Right cardiac atrium (tissue), 5 donors: ENCODE measurements at regions of chr3 and their contacts with region 1.

Region 1: DNA sequence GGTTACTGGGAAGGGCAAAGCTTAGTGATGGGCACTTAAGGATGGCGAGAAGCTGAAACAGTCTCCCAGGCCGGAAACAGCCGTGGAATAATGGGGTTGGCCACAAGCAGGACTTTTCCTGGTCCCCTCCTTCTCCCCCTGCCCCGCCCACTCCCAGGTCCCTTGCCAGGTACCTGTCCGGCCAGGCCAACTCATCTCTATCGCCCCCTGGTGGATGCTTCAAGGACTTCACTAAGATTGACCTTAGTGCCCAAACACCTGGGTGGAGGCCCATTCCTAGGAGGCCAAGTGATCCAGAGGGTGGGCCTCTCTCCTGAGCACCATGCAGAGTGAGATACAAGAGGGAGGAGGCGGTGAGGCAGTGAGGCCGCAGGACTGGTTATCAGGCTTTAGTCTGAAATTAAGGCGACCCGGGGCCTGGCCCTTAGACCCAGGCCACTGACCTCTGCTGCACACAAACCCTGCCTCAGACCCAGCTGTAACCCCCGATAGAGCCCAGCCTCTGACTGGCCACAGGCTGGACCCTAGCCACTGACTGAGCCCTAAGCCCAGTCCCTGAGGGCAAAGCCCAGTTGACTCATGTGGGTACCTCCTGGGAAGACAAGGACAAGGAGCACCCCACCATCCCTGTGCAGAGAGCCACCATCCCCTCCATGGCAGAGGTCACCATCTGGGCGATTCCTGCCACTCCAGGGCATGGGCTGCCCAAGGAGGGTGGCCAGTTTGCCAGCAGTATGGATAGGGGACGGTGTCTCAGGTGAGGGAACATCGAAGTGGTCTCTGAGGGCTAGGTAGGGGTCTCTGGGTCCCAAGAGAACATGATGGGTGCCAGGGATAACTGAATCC is 37.6 kb downstream of the VIPR1 start:
- DNase-seq: peak in 2 of 3 donors; percentile 69 to 70
- ATAC-seq: peak; percentile 2 to 15
- H3K4me3 ChIP-seq: no peak overlapping the region
- H3K27ac ChIP-seq: no peak overlapping the region
- H3K4me1 ChIP-seq: peaks cover 5% of the 10 kb centered on the region
- H3K27me3 ChIP-seq: no peaks in the 10 kb centered on the region

Region 2: DNA sequence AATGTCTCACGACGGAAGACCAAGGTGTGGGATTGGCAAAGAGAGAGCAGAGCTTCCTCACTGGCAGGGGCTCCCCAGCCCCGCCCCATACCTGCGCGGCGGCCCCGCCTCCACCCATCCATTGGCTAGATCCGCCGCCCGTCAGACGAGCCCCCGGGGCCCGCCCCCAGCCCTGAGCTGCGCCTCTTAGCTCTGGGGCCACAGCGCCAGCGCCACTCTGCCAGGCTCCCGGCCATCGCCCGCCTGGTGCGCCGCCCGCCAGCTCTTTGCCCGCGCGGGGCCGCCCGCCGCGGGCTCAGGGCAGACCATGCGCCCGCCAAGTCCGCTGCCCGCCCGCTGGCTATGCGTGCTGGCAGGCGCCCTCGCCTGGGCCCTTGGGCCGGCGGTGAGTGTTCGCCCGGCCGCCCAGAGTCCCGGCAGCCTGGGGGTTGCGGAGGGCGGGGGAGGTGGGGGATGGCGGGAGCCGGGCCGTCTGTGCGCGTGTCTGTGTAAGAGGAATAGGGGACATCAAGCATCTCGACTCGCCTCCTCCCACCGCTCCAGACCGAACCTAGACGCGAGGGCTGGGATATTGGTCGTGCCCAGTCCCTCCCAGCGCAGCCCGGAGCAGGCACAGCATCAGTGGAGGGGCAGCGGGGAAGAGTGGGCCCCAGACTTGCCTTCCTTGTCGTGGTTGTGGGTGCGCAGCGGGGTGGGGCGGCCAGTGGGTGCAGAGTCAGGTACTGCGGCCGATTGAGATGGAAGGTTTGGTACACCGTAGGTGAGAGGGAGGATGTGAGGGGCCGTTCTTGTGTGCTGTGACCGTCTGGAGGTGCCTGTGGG is 37.5 kb before region 1 on chr3 and contains the start of gene VIPR1:
- intact Hi-C with region 1: loop called (anchors 5 kb)
- DNase-seq: peak; percentile 70 to 92 (median 88)
- ATAC-seq: peak; percentile 89 to 91
- H3K4me3 ChIP-seq: peak within 1 kb of the TSS; percentile 54
- H3K27ac ChIP-seq: no peak within 1 kb of the TSS
- H3K4me1 ChIP-seq: peaks cover 3% of the 10 kb centered on the region
- H3K27me3 ChIP-seq: no peaks in the 10 kb centered on the region
- total RNA-seq, gene VIPR1: 4.9 to 12.8 (median 8.6) TPM